Panc1 (cell line): ENCODE measurements at regions of chr11 and their contacts with region 1.

Region 1: DNA sequence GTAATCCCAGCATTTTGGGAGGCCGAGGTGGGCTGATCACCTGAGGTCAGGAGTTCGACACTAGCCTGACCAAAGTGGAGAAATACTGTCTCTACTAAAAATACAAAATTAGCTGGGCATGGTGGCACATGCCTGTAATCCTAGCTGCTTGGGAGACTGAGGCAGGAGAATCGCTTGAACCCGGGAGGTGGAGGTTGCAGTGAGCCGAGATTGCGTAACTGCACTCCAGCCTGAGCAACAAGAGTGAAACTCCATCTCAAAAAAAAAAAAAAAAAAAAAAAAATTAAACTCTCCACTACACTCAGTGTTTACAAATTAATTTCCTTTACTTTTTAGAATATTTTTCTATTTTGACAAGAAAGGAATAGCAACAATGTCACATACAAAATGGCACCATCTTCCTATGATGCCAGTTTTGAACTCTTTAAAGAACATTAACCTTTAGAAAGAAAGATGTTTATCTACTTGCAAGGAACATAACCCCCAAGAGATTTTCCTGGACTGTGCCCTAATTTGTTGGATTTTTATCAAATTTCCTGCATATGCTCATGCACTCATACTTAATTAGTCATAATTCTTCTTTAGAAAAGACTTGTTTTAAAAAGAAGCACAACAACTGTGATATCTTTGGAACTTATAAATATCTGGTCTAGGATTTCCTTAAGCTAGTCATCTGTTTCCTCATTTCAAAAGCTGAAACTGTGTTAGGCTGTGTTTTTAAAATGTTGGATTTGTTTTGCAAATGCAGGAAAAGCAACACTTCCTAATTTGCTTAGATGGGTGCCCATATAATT is 22.6 kb upstream of the HIPK3 start:
- DNase-seq: no peak
- ATAC-seq: no peak
- H3K4me3 ChIP-seq: no peak overlapping the region
- H3K27ac ChIP-seq: no peak overlapping the region
- H3K4me1 ChIP-seq: no peaks in the 10 kb centered on the region
- H3K27me3 ChIP-seq: no peaks in the 10 kb centered on the region
- CTCF ChIP-seq: no peak

Region 2: GRCh38 chr11:33128739-33129138 is 105.9 kb before region 1 on chr11:
- CTCF ChIA-PET with region 1: no interaction called
- POLR2A ChIA-PET with region 1: no interaction called
- in situ Hi-C with region 1: no loop called
- intact Hi-C with region 1: no loop called
- DNase-seq: no peak
- ATAC-seq: no peak
- H3K4me3 ChIP-seq: no peak overlapping the region
- H3K27ac ChIP-seq: no peak overlapping the region
- H3K4me1 ChIP-seq: no peaks in the 10 kb centered on the region
- H3K27me3 ChIP-seq: no peaks in the 10 kb centered on the region
- CTCF ChIP-seq: no peak

Region 3: GRCh38 chr11:33207408-33207985 is 27.1 kb before region 1 on chr11:
- CTCF ChIA-PET with region 1: no interaction called
- POLR2A ChIA-PET with region 1: interaction called, 10 read pairs
- in situ Hi-C with region 1: no loop called
- intact Hi-C with region 1: no loop called
- DNase-seq: no peak
- ATAC-seq: 0 out of 2 replicates have a peak, but pooled peaks have one; percentile 56
- H3K4me3 ChIP-seq: no peak overlapping the region
- H3K27ac ChIP-seq: no peak overlapping the region
- H3K4me1 ChIP-seq: no peaks in the 10 kb centered on the region
- H3K27me3 ChIP-seq: no peaks in the 10 kb centered on the region
- CTCF ChIP-seq: no peak